ENCODE measurements at regions of chr7 and their contacts with region 1.

Region 1: GRCh38 chr7:100049441-100050311 is at the start of gene ZSCAN21:
- DNase-seq: peak; percentile 74
- H3K4me3 Mint-ChIP-seq: peak within 1 kb of the TSS; percentile 84
- H3K27ac Mint-ChIP-seq: peak within 1 kb of the TSS; percentile 89
- H3K4me1 Mint-ChIP-seq: peaks cover 8% of the 10 kb centered on the region
- H3K27me3 Mint-ChIP-seq: no peaks in the 10 kb centered on the region
- total RNA-seq, gene ZSCAN21: 6.1 and 7.7 TPM in 2 replicates

Region 2: DNA sequence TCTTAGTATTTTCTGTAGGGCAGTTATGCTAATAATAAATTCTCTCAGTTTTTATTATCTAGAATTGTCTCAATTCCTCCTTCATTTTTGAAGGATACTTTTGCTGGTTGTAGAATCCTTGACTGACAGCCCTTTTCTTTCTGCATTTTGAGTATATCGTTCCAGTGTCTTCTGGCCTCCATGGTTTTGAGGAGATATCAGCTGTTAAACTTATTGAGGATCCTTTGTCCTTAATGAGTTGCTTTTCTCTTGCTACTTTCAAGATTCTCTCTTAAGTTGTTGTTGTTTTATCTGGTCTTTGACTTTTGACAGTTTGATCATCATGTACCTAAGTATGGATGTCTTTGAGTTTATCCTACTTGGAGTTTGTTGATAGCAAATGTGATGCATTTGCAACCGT is 111.4 kb before region 1 on chr7:
- intact Hi-C with region 1: no loop called
- DNase-seq: no peak
- H3K4me3 Mint-ChIP-seq: no peak overlapping the region
- H3K27ac Mint-ChIP-seq: no peak overlapping the region
- H3K4me1 Mint-ChIP-seq: peaks cover 6% of the 10 kb centered on the region
- H3K27me3 Mint-ChIP-seq: peaks cover 16% of the 10 kb centered on the region

Region 3: GRCh38 chr7:99975782-99976521 is 73.7 kb before region 1 on chr7 and contains the start of gene AZGP1:
- intact Hi-C with region 1: loop called (anchors 5 kb)
- DNase-seq: no peak
- H3K4me3 Mint-ChIP-seq: no peak within 1 kb of the TSS
- H3K27ac Mint-ChIP-seq: no peak within 1 kb of the TSS
- H3K4me1 Mint-ChIP-seq: no peaks in the 10 kb centered on the region
- H3K27me3 Mint-ChIP-seq: peaks cover 9% of the 10 kb centered on the region
- total RNA-seq, gene AZGP1: not detected in 2 replicates

Region 4: GRCh38 chr7:99997545-99998137 is 52.0 kb before region 1 on chr7:
- intact Hi-C with region 1: loop called (anchors 1 kb)
- DNase-seq: peak; percentile 65
- H3K4me3 Mint-ChIP-seq: peak overlapping the region; percentile 66
- H3K27ac Mint-ChIP-seq: peak overlapping the region; percentile 83
- H3K4me1 Mint-ChIP-seq: peaks cover 10% of the 10 kb centered on the region
- H3K27me3 Mint-ChIP-seq: no peaks in the 10 kb centered on the region

Region 5: GRCh38 chr7:100015232-100016209 is 34.2 kb before region 1 on chr7 and contains the start of gene ZKSCAN1:
- intact Hi-C with region 1: loop called (anchors 1 kb)
- DNase-seq: peak; percentile 80
- H3K4me3 Mint-ChIP-seq: peak within 1 kb of the TSS; percentile 91
- H3K27ac Mint-ChIP-seq: peak within 1 kb of the TSS; percentile 95
- H3K4me1 Mint-ChIP-seq: peaks cover 28% of the 10 kb centered on the region
- H3K27me3 Mint-ChIP-seq: no peaks in the 10 kb centered on the region
- total RNA-seq, gene ZKSCAN1: 59.0 and 63.5 TPM in 2 replicates